ENCODE measurements at regions of chr3 and their contacts with region 1.

Region 1: DNA sequence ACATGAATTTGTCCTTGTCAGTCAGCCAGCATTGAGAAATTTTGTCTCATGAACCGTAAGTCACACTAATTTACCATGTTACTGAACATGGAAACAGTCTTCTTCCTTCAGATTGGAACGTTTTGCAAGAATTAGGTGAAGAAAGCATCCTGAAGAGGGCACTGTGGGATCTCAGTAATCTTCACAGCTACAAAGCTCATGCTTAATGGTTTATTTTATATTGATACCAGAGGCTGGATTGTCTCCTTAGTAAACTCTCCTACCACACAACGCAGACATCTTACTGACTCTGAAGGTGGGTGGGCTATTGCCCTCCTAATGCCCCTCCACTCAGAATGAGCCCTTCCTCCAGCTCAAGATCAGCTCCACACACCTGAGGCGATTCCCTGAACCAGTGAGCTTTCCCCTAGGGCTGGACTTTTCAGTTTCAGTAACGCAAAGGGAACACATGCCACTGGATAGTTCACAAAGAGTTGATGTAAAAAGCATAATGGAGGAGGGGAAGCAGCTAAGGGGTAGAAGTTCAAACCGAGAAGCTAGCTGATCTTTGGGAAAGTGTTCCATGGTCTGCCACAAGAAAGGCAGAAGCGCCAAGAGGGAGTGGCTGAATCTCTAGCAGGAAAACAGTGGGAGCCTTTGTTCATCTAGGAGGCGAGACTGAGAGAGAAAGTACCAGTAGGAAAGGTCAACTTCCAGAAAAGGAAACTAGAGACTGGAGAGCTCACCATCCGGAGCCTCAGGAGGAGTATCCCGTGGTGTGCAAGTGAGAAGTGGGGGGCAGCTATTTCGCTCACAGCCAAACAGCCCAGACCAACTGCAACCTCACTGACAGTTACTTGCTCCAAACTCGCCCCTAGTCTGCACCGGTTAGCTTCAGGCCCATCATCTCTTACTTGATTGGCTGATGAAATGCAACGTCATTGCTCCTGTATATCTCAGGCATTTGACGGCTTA is at the start of gene SLC9C1:
- DNase-seq: peak; percentile 40
- CTCF ChIP-seq: peak; percentile 71

Region 2: GRCh38 chr3:112136959-112137693 is 156.5 kb before region 1 on chr3:
- in situ Hi-C with region 1: loop called (anchors 10 kb)
- DNase-seq: no peak
- CTCF ChIP-seq: peak; percentile 82

Region 3: DNA sequence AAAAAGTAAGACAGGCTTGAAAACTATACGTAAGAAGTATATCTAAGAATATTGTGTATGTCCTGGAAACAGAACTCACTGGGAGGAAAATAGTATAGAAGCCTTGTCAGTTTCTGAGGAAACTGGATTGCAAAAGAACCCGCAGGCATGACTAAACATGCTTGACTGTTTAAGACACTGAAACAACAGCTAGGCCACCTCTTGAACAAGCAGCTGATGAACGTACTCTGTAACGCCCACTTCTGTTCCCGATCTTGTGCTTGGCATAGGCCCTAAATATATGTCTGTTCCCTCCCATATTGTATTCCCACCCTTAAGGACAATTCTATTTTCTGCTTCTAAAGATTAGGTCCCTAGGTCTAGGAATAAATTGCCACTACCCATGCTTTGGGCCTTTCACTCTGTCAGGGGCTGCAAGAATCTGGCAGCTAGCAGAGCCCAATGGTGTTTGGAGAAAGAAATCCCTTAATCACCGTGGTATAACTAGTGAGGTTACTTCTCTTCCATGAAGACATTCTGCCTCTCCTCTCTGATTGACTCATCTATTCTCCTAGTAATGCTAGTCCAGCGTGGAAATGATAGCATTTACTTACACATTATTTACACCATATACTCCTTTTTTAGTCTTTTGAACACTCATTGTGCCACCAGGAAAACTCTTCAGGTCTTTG is 85.5 kb after region 1 on chr3:
- in situ Hi-C with region 1: no loop called
- DNase-seq: no peak
- CTCF ChIP-seq: no peak

Region 4: GRCh38 chr3:112555535-112556170 is 262.0 kb after region 1 on chr3:
- in situ Hi-C with region 1: no loop called
- DNase-seq: no peak
- CTCF ChIP-seq: no peak